AG04450 (cell line): ENCODE measurements at regions of chrX and their contacts with region 1.

Region 1: DNA sequence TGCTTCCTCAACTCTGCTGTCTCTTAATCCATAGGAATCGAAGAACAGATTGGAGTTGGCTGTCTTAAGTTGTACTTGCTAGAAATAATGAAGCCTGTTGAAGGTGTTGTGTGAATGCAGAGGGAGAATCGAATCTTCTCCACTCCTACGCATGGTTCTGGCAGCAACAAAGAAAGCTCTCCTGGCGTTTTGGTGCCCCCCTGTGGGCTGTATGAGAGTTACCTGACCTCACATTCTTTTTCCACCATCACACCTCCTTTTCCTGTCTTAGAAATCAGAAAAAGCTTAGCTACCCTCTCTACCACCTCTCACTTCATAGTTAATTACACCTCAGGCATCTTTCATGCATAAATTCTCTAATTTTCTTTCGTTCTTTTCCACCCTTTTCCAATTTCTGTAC is 16.3 kb downstream of the KLF8 start:
- DNase-seq: no peak
- H3K4me3 ChIP-seq: no peak overlapping the region
- H3K27ac ChIP-seq: no peak overlapping the region
- H3K27me3 ChIP-seq: no peaks in the 10 kb centered on the region
- CTCF ChIP-seq: peak; percentile 60

Region 2: DNA sequence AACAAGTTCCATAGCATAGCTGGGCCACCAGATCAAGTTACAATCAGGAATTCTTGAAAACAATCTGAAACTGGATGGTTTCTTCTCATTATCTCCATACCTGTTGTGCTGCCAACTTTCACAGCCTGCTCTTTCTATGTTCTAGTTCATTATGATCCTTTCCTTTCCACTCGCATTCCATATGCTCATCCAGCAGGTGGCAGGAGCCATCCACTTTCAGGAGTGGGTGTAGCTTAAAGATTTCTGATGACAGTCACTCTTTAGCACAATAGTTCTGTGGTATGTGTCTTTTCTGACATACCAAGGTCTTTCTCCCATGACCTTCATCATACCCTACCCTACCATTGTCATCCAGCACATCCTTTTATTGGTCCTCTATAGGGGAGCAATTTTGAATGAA is 1113.3 kb before region 1 on chrX:
- CTCF ChIA-PET with region 1: interaction called, 32 read pairs
- POLR2A ChIA-PET with region 1: no interaction called
- DNase-seq: no peak
- H3K4me3 ChIP-seq: no peak overlapping the region
- H3K27ac ChIP-seq: no peak overlapping the region
- H3K27me3 ChIP-seq: no peaks in the 10 kb centered on the region
- CTCF ChIP-seq: peak; percentile 62

Region 3: GRCh38 chrX:56232221-56233082 is 16.0 kb before region 1 on chrX and contains the start of gene KLF8:
- CTCF ChIA-PET with region 1: interaction called, 10 read pairs
- POLR2A ChIA-PET with region 1: no interaction called
- DNase-seq: no peak
- H3K4me3 ChIP-seq: no peak within 1 kb of the TSS
- H3K27ac ChIP-seq: no peak within 1 kb of the TSS
- H3K27me3 ChIP-seq: no peaks in the 10 kb centered on the region
- CTCF ChIP-seq: no peak
- polyA plus RNA-seq, gene KLF8: 0.04 and 0.05 TPM in 2 replicates